Dendritic cell treated with granulocyte-macrophage colony-stimulating factor and Interleukin-4, amounts not matched to agents 40 ng/mL and 50 ng/mL, for 4 days (primary cell): ENCODE measurements at regions of chr12 and their contacts with region 1.

Region 1: GRCh38 chr12:29103539-29103974 is 45.5 kb upstream of the FAR2 start:
- H3K4me3 Mint-ChIP-seq: peak overlapping the region; percentile 15
- H3K27ac Mint-ChIP-seq: peak overlapping the region; percentile 14
- H3K4me1 Mint-ChIP-seq: peaks cover 20% of the 10 kb centered on the region
- H3K27me3 Mint-ChIP-seq: peaks cover 68% of the 10 kb centered on the region

Region 2: DNA sequence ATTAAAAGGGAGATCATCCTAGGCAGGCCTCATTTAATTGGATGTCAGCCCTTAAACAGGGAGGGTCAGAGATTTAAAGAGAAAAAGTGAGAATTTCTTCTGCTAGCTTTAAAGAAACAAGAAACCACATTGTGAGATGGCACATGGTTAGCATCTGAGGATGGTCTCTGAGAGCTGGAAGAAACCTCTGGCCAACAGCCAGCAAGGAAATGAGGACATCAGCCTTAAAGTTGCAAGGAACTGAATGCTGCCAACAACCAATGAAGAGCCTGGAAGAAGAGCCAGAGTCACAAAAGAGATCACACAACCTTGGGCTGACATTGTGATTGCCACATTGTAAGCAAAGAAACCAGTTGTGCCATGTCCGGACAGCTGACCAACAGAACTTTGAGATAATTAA is 28.0 kb after region 1 on chr12:
- intact Hi-C with region 1: loop called (anchors 5 kb)
- H3K4me3 Mint-ChIP-seq: no peak overlapping the region
- H3K27ac Mint-ChIP-seq: no peak overlapping the region
- H3K4me1 Mint-ChIP-seq: no peaks in the 10 kb centered on the region
- H3K27me3 Mint-ChIP-seq: peaks cover 76% of the 10 kb centered on the region

Region 3: GRCh38 chr12:29155079-29155478 is 51.5 kb after region 1 on chr12:
- intact Hi-C with region 1: loop called (anchors 5 kb)
- H3K4me3 Mint-ChIP-seq: no peak overlapping the region
- H3K27ac Mint-ChIP-seq: no peak overlapping the region
- H3K4me1 Mint-ChIP-seq: peaks cover 56% of the 10 kb centered on the region
- H3K27me3 Mint-ChIP-seq: peaks cover 56% of the 10 kb centered on the region